GM12878 (cell line): ENCODE measurements at regions of chr5 and their contacts with region 1.

Region 1: GRCh38 chr5:160439205-160439600 is 17.5 kb downstream of the PTTG1 start:
- DNase-seq: peak; percentile 89
- ATAC-seq: peak; percentile 75
- H3K4me3 ChIP-seq: peak overlapping the region; percentile 70
- H3K27ac ChIP-seq: peak overlapping the region; percentile 82
- H3K4me1 ChIP-seq: peaks cover 54% of the 10 kb centered on the region
- H3K27me3 ChIP-seq: no peaks in the 10 kb centered on the region
- CTCF ChIP-seq: peak; percentile 83 to 95 (median 88)
- EP300 ChIP-seq: no peak; a peak in 1 of 4 replicates
- POLR2A ChIP-seq: peak; percentile 50; the same call in 1 of the 2 replicates
- RAD21 ChIP-seq: peak; percentile 84

Region 2: GRCh38 chr5:160427607-160428006 is 11.6 kb before region 1 on chr5:
- CTCF ChIA-PET with region 1: interaction called, 133 read pairs
- POLR2A ChIA-PET with region 1: interaction called, 50 read pairs
- RAD21 ChIA-PET with region 1: interaction called, 109 read pairs
- SMC1A ChIA-PET with region 1: interaction called, 135 read pairs
- in situ Hi-C with region 1: no loop called
- intact Hi-C with region 1: no loop called
- DNase-seq: no peak
- ATAC-seq: no peak
- H3K4me3 ChIP-seq: no peak overlapping the region
- H3K27ac ChIP-seq: no peak overlapping the region
- H3K4me1 ChIP-seq: peaks cover 14% of the 10 kb centered on the region
- H3K27me3 ChIP-seq: no peaks in the 10 kb centered on the region
- CTCF ChIP-seq: no peak
- EP300 ChIP-seq: no peak
- POLR2A ChIP-seq: no peak
- RAD21 ChIP-seq: no peak

Region 3: DNA sequence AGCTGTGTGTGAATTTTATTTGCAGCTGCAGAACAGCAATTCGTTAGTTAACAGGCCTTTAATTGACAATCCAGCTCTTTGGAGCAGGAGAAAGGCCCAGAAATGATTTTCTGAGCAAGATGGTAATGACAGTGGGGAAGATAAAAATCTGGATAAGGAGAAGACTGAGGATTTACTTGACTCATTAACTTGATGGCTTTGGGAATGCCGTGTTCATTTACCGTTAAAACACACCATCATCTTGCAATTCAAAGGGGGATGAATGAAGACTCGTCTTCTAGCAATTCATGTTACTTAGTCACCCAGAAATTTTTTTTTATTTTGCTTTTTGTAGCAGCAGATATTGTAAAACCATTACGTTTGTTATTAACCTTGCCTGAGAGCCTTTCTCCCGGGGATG is 34.5 kb after region 1 on chr5:
- CTCF ChIA-PET with region 1: interaction called, 230 read pairs
- POLR2A ChIA-PET with region 1: interaction called, 156 read pairs
- RAD21 ChIA-PET with region 1: interaction called, 329 read pairs
- SMC1A ChIA-PET with region 1: interaction called, 511 read pairs
- in situ Hi-C with region 1: loop called (anchors 5 kb)
- intact Hi-C with region 1: loop called (anchors 1 kb)
- DNase-seq: no peak
- ATAC-seq: no peak
- H3K4me3 ChIP-seq: peak overlapping the region; percentile 88
- H3K27ac ChIP-seq: peak overlapping the region; percentile 54
- H3K4me1 ChIP-seq: peaks cover 18% of the 10 kb centered on the region
- H3K27me3 ChIP-seq: no peaks in the 10 kb centered on the region
- CTCF ChIP-seq: no peak
- EP300 ChIP-seq: no peak
- POLR2A ChIP-seq: no peak
- RAD21 ChIP-seq: no peak

Region 4: DNA sequence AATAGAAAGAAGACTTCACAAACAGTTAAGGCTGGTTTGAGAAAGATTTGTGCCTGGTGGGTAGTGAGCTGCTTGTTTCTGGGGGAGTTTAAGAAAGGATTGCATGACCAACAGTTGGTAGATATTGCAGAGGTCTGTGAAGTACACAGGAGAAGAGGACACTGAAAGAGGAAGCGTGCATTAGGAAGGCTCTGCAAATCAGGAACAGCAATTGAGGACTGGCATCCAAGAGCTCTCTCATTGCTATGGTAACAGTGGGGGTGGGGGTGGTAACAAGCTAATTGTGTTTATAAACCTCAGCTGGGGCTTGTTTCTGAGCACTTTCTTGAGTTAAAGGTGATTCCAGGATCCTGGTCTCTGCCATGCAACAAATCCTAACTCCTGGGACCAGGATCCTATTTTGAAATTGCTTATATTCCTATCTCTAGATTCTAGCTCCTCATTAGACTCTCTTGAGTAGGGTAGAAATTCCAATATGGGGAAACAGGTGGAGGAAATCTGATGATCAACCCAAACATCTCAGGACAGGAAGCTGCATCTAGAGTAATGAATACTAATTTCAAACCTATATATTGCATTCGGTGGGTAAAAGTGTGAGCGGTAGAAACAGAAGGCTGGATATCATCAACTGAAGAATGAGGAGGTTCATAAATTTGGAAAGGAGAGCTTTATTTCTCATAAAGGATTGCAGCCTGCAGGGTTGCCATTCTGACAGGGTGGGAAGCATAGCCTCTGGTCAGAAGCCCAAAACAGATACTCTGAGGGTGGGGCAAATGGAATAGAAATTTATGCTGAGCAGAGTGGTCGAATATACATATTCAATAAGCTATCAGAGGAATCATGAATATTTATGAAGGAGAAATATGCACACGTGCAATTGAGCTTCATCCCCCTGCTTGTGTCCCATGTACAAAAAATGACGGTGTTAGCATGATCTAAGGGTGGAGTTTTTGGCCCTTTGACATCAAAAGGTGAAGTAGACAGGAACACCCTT is 61.9 kb after region 1 on chr5:
- CTCF ChIA-PET with region 1: interaction called, 235 read pairs
- POLR2A ChIA-PET with region 1: interaction called, 4 read pairs
- RAD21 ChIA-PET with region 1: interaction called, 162 read pairs
- SMC1A ChIA-PET with region 1: interaction called, 205 read pairs
- in situ Hi-C with region 1: no loop called
- intact Hi-C with region 1: no loop called
- DNase-seq: no peak
- ATAC-seq: peak; percentile 28
- H3K4me3 ChIP-seq: no peak overlapping the region
- H3K27ac ChIP-seq: no peak overlapping the region
- H3K4me1 ChIP-seq: peaks cover 22% of the 10 kb centered on the region
- H3K27me3 ChIP-seq: no peaks in the 10 kb centered on the region
- CTCF ChIP-seq: no peak
- EP300 ChIP-seq: no peak
- POLR2A ChIP-seq: no peak
- RAD21 ChIP-seq: no peak

Region 5: GRCh38 chr5:160616712-160617497 is 177.7 kb after region 1 on chr5:
- CTCF ChIA-PET with region 1: interaction called, 5 read pairs
- POLR2A ChIA-PET with region 1: no interaction called
- RAD21 ChIA-PET with region 1: no interaction called
- SMC1A ChIA-PET with region 1: interaction called, 11 read pairs
- in situ Hi-C with region 1: no loop called
- intact Hi-C with region 1: no loop called
- DNase-seq: no peak
- ATAC-seq: no peak
- H3K4me3 ChIP-seq: no peak overlapping the region
- H3K27ac ChIP-seq: no peak overlapping the region
- H3K4me1 ChIP-seq: no peaks in the 10 kb centered on the region
- H3K27me3 ChIP-seq: no peaks in the 10 kb centered on the region; a peak in 1 of 4 replicates
- CTCF ChIP-seq: no peak
- EP300 ChIP-seq: no peak
- POLR2A ChIP-seq: no peak
- RAD21 ChIP-seq: no peak

Region 6: GRCh38 chr5:160802592-160802991 is 363.4 kb after region 1 on chr5:
- CTCF ChIA-PET with region 1: interaction called, 18 read pairs
- POLR2A ChIA-PET with region 1: no interaction called
- RAD21 ChIA-PET with region 1: interaction called, 8 read pairs
- SMC1A ChIA-PET with region 1: interaction called, 20 read pairs
- in situ Hi-C with region 1: no loop called
- intact Hi-C with region 1: no loop called
- DNase-seq: no peak
- ATAC-seq: peak; percentile 73
- H3K4me3 ChIP-seq: no peak overlapping the region
- H3K27ac ChIP-seq: no peak overlapping the region
- H3K4me1 ChIP-seq: no peaks in the 10 kb centered on the region; the same call in 1 of the 2 replicates
- H3K27me3 ChIP-seq: no peaks in the 10 kb centered on the region
- CTCF ChIP-seq: peak; percentile 24 to 70 (median 34); a peak in 3 of 6 replicates
- EP300 ChIP-seq: no peak
- POLR2A ChIP-seq: no peak
- RAD21 ChIP-seq: peak; percentile 56

Region 7: DNA sequence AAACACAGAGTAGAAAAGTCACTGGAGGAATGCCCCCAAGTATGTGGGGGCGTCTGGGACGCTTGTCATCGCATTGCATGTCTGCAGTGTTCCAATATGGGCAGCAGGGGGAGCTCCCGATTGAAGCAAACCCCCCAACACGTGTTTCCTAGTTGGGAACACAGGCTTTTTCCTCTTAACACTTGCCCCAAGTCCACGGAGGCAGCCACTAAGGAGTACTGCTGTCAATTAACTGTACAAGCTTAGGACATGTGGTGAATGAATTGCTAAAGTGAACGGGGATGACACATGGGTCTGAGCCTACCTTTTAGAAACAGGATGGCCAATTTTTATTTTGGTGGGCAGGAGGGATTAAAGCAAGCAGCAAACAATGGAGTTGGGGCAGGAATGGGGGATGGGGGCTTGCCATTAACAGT is 1105.2 kb after region 1 on chr5:
- CTCF ChIA-PET with region 1: no interaction called
- POLR2A ChIA-PET with region 1: no interaction called
- RAD21 ChIA-PET with region 1: no interaction called
- SMC1A ChIA-PET with region 1: no interaction called
- in situ Hi-C with region 1: loop called (anchors 10 kb)
- intact Hi-C with region 1: no loop called
- DNase-seq: no peak
- ATAC-seq: peak; percentile 66
- H3K4me3 ChIP-seq: no peak overlapping the region
- H3K27ac ChIP-seq: no peak overlapping the region
- H3K4me1 ChIP-seq: no peaks in the 10 kb centered on the region
- H3K27me3 ChIP-seq: peaks cover 3 to 8% of the 10 kb centered on the region in 2 experiments; a peak in 2 of 4 replicates
- CTCF ChIP-seq: peak; percentile 75 to 94 (median 90)
- EP300 ChIP-seq: no peak
- POLR2A ChIP-seq: no peak
- RAD21 ChIP-seq: peak; percentile 64